AG04449 (cell line): ENCODE measurements at regions of chr19 and their contacts with region 1.

Region 1: DNA sequence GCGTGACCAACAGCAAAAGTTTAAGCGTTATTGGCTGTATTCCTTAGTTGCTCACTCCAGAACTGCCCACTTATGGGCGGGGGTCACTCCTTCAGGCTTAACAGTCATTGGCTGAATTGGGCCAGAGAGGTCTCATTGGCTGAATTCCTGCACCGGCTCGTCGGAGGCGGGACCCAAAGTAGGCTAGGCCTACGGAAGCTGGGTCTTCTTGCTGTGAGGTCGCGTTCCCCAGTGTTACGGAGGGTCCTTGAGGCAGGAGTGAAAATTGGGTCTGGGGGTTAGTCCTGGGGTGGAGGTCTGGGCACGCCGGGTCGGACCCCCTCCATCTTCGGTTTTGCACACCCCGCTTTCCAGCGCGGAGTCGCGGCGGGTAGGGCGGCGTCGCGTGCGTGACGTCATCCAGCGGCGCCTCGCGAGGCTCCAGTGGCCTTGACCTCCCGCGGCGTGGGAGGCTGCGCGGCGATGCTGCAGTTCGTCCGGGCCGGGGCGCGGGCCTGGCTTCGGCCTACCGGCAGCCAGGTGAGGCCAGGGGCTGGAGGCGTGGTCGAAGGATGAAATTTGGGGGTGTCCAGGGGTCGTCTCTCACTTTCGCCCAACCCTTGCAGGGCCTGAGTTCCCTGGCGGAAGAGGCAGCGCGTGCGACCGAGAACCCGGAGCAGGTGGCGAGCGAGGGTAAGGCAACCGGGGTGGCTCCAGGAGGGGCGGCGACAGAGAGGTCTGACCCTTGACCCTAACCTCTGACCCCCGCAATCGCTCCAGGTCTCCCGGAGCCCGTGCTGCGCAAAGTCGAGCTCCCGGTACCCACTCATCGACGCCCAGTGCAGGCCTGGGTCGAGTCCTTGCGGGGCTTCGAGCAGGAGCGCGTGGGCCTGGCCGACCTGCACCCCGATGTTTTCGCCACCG is at the start of gene MRPL4:
- DNase-seq: peak; percentile 90
- H3K4me3 ChIP-seq: peak within 1 kb of the TSS; percentile 99
- CTCF ChIP-seq: no peak

Region 2: GRCh38 chr19:10000171-10000826 is 251.7 kb before region 1 on chr19:
- CTCF ChIA-PET with region 1: interaction called, 21 read pairs
- POLR2A ChIA-PET with region 1: no interaction called
- DNase-seq: no peak
- H3K4me3 ChIP-seq: no peak overlapping the region
- CTCF ChIP-seq: peak; percentile 80

Region 3: DNA sequence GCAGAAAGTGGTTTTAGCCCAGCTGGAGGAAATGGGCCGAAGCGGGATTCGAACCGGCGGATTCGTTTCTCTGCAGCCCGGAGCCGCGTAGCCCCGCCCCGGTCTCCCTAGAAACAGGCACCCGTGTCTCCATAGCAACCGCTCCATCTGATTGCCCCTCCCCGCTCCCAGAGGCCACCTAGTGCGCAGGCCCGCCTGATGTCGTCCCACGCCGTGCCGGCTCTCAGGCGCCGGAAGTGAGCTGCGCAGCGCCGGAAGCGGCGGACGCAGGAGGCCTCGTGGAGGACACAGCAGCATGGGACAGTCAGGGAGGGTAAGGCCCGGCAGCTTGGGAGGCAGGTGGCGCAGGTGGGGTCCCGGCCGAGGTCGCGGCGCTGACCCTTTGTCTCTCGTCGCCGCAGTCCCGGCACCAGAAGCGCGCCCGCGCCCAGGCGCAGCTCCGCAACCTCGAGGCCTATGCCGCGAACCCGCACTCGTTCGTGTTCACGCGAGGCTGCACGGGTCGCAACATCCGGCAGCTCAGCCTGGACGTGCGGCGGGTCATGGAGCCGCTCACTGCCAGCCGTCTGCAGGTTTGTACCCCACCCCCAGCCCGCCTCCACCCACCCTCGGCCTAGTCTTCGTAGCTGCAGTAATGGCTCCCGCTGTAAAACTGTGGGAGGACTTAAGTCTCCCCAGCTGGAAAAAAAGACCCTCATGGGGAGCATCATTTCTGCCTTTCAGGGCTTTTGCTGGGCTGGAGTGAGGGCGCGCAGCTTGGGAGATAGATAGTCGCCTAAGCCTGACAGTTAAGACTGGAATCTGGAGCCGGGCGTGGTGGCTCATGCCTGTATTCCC is 145.7 kb before region 1 on chr19 and contains the start of gene PPAN:
- CTCF ChIA-PET with region 1: interaction called, 68 read pairs
- POLR2A ChIA-PET with region 1: no interaction called
- DNase-seq: peak; percentile 83
- H3K4me3 ChIP-seq: peak within 1 kb of the TSS; percentile 86
- CTCF ChIP-seq: no peak

Region 4: GRCh38 chr19:10142701-10143375 is 109.2 kb before region 1 on chr19:
- CTCF ChIA-PET with region 1: interaction called, 10 read pairs
- POLR2A ChIA-PET with region 1: no interaction called
- DNase-seq: no peak
- H3K4me3 ChIP-seq: no peak overlapping the region
- CTCF ChIP-seq: no peak

Region 5: DNA sequence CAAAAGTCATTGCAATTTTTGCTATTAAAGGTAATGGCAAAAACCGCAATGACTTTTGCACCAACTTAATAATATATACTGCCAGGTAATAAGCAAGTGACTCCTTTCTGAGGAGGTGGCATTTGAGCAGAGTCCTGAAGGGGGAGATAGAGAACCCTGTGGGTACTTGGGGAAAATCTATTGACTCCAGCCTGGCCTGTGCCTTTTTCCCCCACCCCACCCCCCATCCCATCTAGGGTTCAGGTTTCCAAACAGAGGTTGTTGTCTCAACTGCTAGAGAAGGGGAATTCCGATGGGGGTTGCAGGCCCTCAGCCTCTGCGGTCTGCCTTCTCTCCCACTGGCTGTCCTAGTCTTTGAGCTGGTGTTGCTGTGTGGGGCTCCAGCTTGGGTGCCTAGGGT is 32.4 kb before region 1 on chr19:
- CTCF ChIA-PET with region 1: interaction called, 10 read pairs
- POLR2A ChIA-PET with region 1: no interaction called
- DNase-seq: no peak
- H3K4me3 ChIP-seq: no peak overlapping the region
- CTCF ChIP-seq: peak; percentile 17

Region 6: DNA sequence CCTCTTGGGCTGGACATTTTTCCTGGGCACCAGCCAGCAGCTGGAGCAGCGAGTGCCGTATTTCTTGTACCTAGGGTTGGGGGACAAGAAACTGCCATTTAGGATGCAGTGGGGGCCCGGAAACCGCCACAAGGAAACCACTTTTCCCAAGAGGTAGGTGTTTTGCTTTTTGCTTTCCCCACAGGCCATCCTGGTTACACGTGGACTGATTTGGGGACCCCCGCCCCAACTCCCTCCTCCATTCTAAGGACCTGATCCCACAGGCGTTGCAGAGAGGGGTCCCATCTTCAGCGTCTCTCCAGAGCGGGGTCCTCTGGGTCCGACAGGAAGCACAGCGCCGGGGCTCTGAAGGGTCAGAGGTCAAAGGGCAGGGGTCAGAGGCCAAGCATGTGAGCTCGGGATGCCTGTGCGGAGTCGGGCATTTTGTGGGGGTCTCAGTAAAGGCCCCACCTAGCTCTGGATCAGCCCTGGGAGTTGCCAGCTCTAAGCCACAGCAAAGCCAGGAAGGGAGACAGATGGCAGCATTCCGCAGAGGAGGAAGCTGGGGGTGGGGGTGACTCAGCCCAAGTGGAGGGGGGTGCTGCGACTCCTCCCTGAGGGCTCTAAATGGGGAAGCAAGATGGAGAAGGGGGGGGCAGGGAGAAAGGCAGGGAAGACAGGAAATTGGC is 53.2 kb after region 1 on chr19:
- CTCF ChIA-PET with region 1: no interaction called
- POLR2A ChIA-PET with region 1: no interaction called
- DNase-seq: no peak
- H3K4me3 ChIP-seq: no peak overlapping the region
- CTCF ChIP-seq: no peak

Region 7: DNA sequence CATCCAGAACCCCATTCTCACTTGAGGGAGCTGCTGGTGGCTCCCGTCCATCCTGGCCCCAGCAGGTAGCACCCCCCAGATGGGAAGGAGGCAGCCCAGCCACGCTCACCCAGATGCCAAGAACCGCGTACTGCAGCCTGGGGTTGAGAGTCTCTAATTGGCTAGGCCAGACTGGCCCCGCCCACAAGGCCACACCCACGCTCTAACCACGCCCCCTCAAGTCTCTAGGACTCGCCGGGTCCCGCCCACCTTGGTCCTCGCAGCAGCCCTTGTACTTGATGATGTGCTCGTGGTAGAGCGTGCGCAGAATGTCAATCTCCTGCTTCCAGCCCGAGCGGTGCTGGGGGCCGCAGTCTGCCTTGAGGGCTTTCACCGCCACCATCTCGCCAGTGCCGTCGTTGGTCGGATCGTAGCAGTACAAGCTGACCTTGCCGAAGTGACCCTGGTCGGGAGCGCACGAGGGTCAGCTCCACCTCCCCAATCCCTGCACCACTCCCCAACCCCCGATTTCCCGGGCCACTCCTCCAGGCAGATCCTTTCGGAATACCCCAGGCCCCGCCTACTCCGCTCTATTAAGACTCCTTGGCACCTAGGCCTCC is 101.8 kb after region 1 on chr19:
- CTCF ChIA-PET with region 1: no interaction called
- POLR2A ChIA-PET with region 1: no interaction called
- DNase-seq: no peak
- H3K4me3 ChIP-seq: no peak overlapping the region
- CTCF ChIP-seq: no peak